A549 (cell line): ENCODE measurements at regions of chr5 and their contacts with region 1.

Region 1: DNA sequence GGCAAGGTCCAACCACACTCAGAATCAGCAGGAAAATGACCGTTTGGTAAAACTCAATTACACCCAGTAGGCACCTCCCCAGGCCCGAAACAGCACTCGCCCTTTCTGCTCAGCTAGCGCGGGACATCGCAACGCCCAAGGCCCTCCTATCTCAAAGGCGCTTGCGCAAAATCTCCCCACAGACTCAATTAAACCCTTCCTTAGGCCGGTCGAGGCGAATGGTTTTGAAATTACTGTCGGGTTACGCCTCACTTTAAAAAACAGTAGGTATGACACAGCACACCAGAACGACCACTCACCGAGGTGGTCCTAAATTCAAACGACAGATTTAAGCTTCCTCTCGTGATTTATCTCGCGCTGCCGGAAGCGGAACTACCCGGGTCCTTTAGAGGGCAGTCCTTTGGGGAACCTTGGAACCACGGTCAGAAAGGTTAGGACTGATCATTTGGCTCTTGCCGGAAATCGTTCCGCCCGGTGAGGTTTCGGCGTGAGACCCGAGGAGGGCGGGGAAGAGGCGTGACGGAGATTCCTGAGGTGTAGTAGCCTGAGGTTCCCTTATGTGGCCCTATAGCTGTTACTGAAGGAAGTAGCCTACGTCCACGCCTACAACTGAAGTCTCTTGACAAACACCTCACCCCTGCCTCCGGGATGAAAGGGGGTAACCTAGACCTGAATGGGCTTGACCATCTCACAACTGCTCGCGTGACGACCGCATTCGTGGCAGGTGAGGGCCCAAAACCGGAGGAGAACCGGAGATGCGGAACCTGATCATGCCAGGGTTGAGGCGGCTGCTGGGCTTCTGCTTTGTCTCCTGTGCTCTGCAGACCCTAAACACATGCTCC is at the starts of genes GIN1 and PPIP5K2:
- DNase-seq: peak; percentile 87 to 99
- ATAC-seq: peak; percentile 97 to 98
- H3K4me3 ChIP-seq: peak within 1 kb of the TSS; percentile 92
- H3K27ac ChIP-seq: peak within 1 kb of the TSS; percentile 93 to 95
- H3K4me1 ChIP-seq: peaks cover 17% of the 10 kb centered on the region
- CTCF ChIP-seq: no peak
- EP300 ChIP-seq: no peak
- POLR2A ChIP-seq: peak; percentile 66
- RAD21 ChIP-seq: no peak
- polyA plus RNA-seq, gene GIN1: 9.4 and 13.5 TPM in 2 replicates
- polyA plus RNA-seq, gene PPIP5K2: 50.1 and 61.7 TPM in 2 replicates

Region 2: GRCh38 chr5:103139264-103139865 is 19.4 kb after region 1 on chr5:
- CTCF ChIA-PET with region 1: interaction called, 17 read pairs
- POLR2A ChIA-PET with region 1: interaction called, 8 read pairs
- DNase-seq: peak; percentile 61 to 76
- ATAC-seq: peak; percentile 99
- H3K4me3 ChIP-seq: no peak overlapping the region
- H3K27ac ChIP-seq: no peak overlapping the region
- H3K4me1 ChIP-seq: peaks cover 5% of the 10 kb centered on the region; the same call in 1 of the 3 replicates
- CTCF ChIP-seq: peak; percentile 91
- EP300 ChIP-seq: no peak
- POLR2A ChIP-seq: no peak
- RAD21 ChIP-seq: peak; percentile 89 to 93

Region 3: DNA sequence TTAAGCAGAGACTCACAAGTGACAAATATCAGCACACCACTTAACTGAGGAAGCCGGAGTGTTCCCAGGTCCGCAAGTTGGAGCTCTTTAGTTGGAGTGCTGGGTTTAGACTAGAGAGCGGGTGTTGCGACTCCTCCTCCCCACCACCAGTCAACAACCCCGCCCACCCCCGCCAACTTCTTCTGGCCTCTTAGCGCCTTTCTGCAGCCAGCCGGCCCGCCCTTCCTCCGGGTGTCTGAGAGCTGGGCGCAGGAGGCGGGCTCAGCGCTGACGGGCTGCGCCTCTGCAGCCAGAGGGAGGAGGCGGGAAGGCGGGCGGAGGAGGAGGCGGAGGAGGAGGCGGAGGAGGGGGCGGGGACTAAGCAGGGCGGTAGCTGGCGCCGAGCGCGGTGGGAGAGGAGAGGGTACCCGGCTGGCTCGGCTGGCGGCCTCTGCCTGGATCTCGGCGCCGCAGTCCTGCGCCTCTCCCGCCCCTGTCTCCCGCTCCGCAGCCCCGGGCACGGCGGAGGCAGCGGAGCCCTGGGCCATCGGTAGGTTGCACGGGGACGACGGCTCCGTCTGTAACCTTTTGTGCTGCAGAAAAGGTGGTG is 138.5 kb after region 1 on chr5 and contains the start of gene MACIR:
- CTCF ChIA-PET with region 1: no interaction called
- POLR2A ChIA-PET with region 1: interaction called, 25 read pairs
- DNase-seq: peak; percentile 86 to 98
- ATAC-seq: peak; percentile 85 to 94
- H3K4me3 ChIP-seq: peak within 1 kb of the TSS; percentile 90
- H3K27ac ChIP-seq: peak within 1 kb of the TSS; percentile 93 to 95
- H3K4me1 ChIP-seq: peaks cover 34% of the 10 kb centered on the region
- CTCF ChIP-seq: no peak
- EP300 ChIP-seq: no peak
- POLR2A ChIP-seq: peak; percentile 91
- RAD21 ChIP-seq: 0 out of 5 replicates have a peak, but pooled peaks of 1 of the 2 experiments have one; percentile 11
- polyA plus RNA-seq, gene MACIR: 35.3 and 38.8 TPM in 2 replicates